ENCODE measurements at regions of chr15 and their contacts with region 1.

Region 1: GRCh38 chr15:65184868-65185738 is at the start of gene CLPX:
- DNase-seq: peak; percentile 98
- H3K4me3 ChIP-seq: peak within 1 kb of the TSS; percentile 74 to 97 (median 94)
- H3K27ac ChIP-seq: peak within 1 kb of the TSS; percentile 77 to 97 (median 95)
- H3K4me1 ChIP-seq: peaks cover 17 to 52% (median 41%) of the 10 kb centered on the region in 6 donors
- H3K27me3 ChIP-seq: no peaks in the 10 kb centered on the region
- CTCF ChIP-seq: peak in 1 of 11 experiments; percentile 14
- POLR2A ChIP-seq: peak in 1 of 3 donors; percentile 53
- total RNA-seq, gene CLPX: 42.2 to 58.3 (median 52.5) TPM

Region 2: GRCh38 chr15:64527263-64527984 is 657.7 kb before region 1 on chr15:
- intact Hi-C with region 1: no loop called
- DNase-seq: no peak
- H3K4me3 ChIP-seq: no peak overlapping the region
- H3K27ac ChIP-seq: no peak overlapping the region
- H3K4me1 ChIP-seq: peaks cover 0 to 35% (median 12%) of the 10 kb centered on the region in 6 donors
- H3K27me3 ChIP-seq: no peaks in the 10 kb centered on the region
- CTCF ChIP-seq: no peak
- POLR2A ChIP-seq: no peak

Region 3: DNA sequence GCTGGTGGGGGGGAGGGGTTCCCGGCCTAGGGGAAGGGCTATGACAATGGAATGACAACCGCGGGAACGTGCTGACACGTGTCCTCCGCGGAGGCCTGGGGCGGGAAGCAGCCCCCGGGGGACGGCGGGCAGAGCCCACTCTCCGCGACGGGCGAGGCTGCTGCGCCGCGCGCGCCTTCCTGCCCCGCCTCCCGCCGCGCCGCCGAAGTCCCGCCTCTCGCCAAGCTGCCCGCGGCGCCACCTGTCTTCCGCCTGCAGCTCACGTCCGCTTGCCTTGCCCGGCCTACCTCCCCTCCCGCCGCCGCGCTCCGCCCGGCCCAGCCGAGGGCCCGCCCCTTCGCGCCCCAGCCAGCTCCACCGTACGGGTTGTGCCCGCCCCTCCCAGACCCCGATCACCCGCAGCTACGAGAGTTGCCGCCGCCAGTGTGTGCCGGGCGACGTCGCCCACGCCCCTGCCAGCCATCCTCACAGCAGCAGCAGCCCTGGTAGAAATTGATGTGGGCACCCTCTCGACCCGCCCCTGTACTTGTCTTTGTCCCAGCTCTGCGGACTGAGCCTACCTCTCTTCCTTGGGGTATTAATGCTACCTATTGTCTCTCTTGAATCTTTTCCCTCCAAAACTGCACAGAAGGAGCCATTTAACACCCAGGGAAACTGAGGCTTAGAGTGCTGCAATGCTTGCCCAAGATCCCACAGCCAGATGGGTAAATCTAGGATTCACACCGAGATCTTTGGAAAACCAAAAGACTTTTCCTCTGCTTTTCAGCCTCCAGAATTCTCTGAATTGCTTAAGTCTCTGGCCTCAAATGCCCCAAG is 101.8 kb after region 1 on chr15 and contains the start of gene PARP16:
- intact Hi-C with region 1: loop called (anchors 5 kb)
- DNase-seq: peak; percentile 100
- H3K4me3 ChIP-seq: peak within 1 kb of the TSS; percentile 54 to 90 (median 69)
- H3K27ac ChIP-seq: peak within 1 kb of the TSS; percentile 83 to 91 (median 86)
- H3K4me1 ChIP-seq: peaks cover 8 to 47% (median 23%) of the 10 kb centered on the region in 6 donors
- H3K27me3 ChIP-seq: no peaks in the 10 kb centered on the region
- CTCF ChIP-seq: peak in 10 of 11 experiments; percentile 24 to 88 (median 74)
- POLR2A ChIP-seq: peak in 2 of 3 donors; percentile 8 to 71
- total RNA-seq, gene PARP16: 8.7 to 11.3 (median 10.2) TPM

Region 4: DNA sequence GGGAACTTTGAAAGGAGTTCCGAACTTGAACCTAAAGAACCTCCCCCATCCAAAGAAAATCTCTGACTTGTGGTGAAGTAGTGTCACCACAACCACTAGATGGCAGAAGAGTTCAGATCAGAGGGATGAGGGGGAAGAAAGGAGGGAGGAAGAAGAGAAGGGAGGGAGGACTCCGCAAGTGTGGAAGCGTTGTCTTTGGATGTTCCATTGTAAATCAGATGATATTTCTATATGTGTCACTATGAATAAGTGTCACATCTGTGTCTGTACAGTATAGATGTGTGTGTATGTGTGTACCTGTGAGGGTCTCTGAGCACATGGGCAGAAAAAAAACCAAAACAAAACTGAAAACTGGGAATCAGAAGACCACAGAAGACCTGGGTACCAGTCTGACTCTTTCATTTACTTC is 453.6 kb after region 1 on chr15:
- intact Hi-C with region 1: no loop called
- DNase-seq: no peak
- H3K4me3 ChIP-seq: no peak overlapping the region
- H3K27ac ChIP-seq: no peak overlapping the region
- H3K4me1 ChIP-seq: peaks cover 0 to 20% (median 10%) of the 10 kb centered on the region in 6 donors
- H3K27me3 ChIP-seq: no peaks in the 10 kb centered on the region
- CTCF ChIP-seq: peak; percentile 57 to 88 (median 76)
- POLR2A ChIP-seq: no peak

Measured in spleen (tissue), 13 donors.